Naive thymus-derived CD8-positive, alpha-beta T cell (primary cell): ENCODE measurements at regions of chr5 and their contacts with region 1.

Region 1: DNA sequence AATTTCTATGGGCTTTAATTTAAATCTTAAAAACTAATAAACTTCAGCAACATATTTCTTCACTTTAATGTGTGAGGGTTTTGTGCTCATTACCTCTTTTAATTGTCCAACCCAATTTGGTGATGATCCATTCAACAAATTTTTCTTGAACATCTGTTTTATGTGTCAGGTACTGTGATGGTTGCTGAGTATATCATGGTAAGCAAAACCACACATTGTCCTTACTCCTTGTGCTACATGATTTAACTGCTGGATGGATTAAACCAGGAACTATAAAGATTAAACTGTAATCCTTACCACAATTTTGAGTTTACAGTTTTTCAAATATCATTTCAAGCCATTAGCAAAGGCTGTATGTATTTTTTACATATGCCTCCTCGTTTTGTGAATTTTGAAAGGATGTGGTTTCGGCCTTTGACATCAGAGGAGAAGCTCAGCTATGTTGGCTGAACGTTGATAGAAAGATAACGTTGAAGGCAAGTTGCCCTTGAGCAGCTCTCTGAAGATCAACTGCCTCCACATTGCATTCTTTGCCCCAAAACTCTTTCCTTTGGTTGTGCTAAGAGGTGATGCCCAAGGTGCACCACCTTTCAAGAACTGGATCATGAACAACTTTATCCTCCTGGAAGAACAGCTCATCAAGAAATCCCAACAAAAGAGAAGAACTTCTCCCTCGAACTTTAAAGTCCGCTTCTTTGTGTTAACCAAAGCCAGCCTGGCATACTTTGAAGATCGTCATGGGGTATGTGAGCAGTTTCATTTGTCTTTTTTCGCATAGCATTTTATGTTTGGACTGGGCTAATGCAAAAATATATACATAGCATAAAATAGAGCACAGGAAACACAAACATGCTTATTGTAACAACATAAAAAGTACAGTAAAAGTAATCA is at the start of gene ITK:
- DNase-seq: peak in 8 of 10 donors; percentile 38 to 83 (median 70)
- ATAC-seq: peak; percentile 81 to 90
- H3K4me3 Mint-ChIP-seq: peak within 1 kb of the TSS; percentile 80 to 100 (median 98)
- H3K27ac Mint-ChIP-seq: peak within 1 kb of the TSS; percentile 92 to 100 (median 96)
- H3K4me1 Mint-ChIP-seq: peaks cover 28 to 56% (median 52%) of the 10 kb centered on the region in 4 donors
- H3K27me3 Mint-ChIP-seq: no peaks in the 10 kb centered on the region
- polyA plus RNA-seq, gene ITK: 109 to 231 (median 148) TPM

Region 2: DNA sequence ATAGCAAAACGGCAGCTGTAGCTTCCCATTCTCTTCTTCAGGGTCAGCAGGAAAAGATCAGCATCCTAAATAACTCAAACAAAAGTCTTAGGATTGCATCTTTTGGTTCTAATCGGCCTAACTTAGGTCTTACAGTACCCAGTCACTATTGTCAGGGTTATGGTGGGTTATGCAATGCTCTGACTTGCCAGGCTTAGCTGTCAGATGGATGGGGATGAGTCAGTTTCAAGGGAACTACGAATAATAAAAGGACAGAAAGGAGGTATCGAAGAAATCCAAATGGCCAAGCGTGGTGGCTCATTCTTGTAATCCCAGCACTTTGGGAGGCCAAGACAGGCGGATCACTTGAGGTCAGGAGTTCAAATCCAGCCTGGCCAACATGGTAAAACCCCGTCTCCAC is 284.1 kb before region 1 on chr5:
- POLR2A ChIA-PET with region 1: no interaction called
- DNase-seq: no peak
- ATAC-seq: no peak
- H3K4me3 Mint-ChIP-seq: no peak overlapping the region
- H3K27ac Mint-ChIP-seq: no peak overlapping the region
- H3K4me1 Mint-ChIP-seq: peaks cover 9 to 27% (median 22%) of the 10 kb centered on the region in 4 donors
- H3K27me3 Mint-ChIP-seq: peaks cover 0 to 3% (median 0%) of the 10 kb centered on the region in 5 donors

Region 3: GRCh38 chr5:157108976-157109375 is 71.6 kb before region 1 on chr5 and contains the start of gene HAVCR2:
- POLR2A ChIA-PET with region 1: no interaction called
- DNase-seq: peak in 9 of 10 donors; percentile 10 to 72 (median 45)
- ATAC-seq: peak; percentile 95 to 97
- H3K4me3 Mint-ChIP-seq: peak within 1 kb of the TSS; percentile 68 to 89 (median 84)
- H3K27ac Mint-ChIP-seq: peak within 1 kb of the TSS; percentile 78 to 96 (median 92)
- H3K4me1 Mint-ChIP-seq: peaks cover 18 to 59% (median 42%) of the 10 kb centered on the region in 4 donors
- H3K27me3 Mint-ChIP-seq: no peaks in the 10 kb centered on the region
- polyA plus RNA-seq, gene HAVCR2: 4.4 to 8.9 (median 5.4) TPM

Region 4: GRCh38 chr5:157148734-157149615 is 31.6 kb before region 1 on chr5:
- POLR2A ChIA-PET with region 1: interaction called, 16 read pairs
- DNase-seq: peak; percentile 55 to 87 (median 81)
- ATAC-seq: peak; percentile 72 to 78
- H3K4me3 Mint-ChIP-seq: peak overlapping the region in 6 of 10 donors; percentile 1 to 55 (median 19)
- H3K27ac Mint-ChIP-seq: peak overlapping the region; percentile 34 to 91 (median 74)
- H3K4me1 Mint-ChIP-seq: peaks cover 17 to 48% (median 43%) of the 10 kb centered on the region in 4 donors
- H3K27me3 Mint-ChIP-seq: no peaks in the 10 kb centered on the region

Region 5: GRCh38 chr5:157167214-157167621 is 13.4 kb before region 1 on chr5:
- POLR2A ChIA-PET with region 1: interaction called, 17 read pairs
- DNase-seq: no peak
- ATAC-seq: no peak
- H3K4me3 Mint-ChIP-seq: peak overlapping the region; percentile 1 to 82 (median 68)
- H3K27ac Mint-ChIP-seq: peak overlapping the region; percentile 6 to 94 (median 78)
- H3K4me1 Mint-ChIP-seq: peaks cover 34 to 63% (median 48%) of the 10 kb centered on the region in 4 donors
- H3K27me3 Mint-ChIP-seq: no peaks in the 10 kb centered on the region

Region 6: GRCh38 chr5:157225469-157226422 is 45.1 kb after region 1 on chr5:
- POLR2A ChIA-PET with region 1: interaction called, 990 read pairs
- DNase-seq: peak in 1 of 10 donors; percentile 32
- ATAC-seq: peak; percentile 23 to 24
- H3K4me3 Mint-ChIP-seq: peak overlapping the region in 9 of 10 donors; percentile 2 to 66 (median 33)
- H3K27ac Mint-ChIP-seq: peak overlapping the region; percentile 65 to 92 (median 82)
- H3K4me1 Mint-ChIP-seq: peaks cover 25 to 69% (median 46%) of the 10 kb centered on the region in 4 donors
- H3K27me3 Mint-ChIP-seq: no peaks in the 10 kb centered on the region

Region 7: DNA sequence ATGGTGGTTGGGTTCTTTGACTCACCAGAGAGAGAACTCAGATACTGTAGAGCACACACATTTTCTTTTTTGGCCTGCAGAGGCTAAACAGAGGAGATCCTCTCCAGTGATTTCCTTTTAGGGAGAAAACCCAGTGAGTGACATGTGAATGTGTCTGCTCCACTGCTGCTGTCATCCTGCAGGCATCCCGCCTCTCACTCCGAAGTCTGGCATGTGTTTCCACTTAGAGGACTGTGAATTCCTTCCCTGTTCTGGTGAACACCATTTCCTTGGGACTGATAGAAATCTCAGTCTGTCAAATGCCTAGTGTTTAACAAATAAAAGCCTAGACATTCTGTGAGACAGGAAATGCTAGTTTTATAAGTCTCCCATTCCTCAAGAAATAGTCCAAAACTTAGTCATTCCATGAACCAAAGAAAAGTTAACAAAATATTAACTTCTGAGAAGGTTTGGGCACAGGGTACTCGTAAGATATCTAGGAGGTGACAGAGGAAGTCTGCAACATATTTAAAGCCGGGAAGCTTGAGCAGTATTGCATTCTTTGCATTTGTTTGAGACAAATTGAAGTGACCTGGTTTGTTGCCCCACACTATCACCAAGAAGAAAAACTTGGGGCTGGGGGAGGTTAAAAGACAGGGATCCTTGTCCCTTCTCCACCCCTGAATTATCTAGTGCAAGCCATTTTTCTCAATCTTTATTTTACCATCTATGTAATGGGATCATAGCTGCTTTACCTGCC is 204.5 kb after region 1 on chr5:
- POLR2A ChIA-PET with region 1: no interaction called
- DNase-seq: no peak
- ATAC-seq: no peak
- H3K4me3 Mint-ChIP-seq: no peak overlapping the region
- H3K27ac Mint-ChIP-seq: peak overlapping the region in 5 of 10 donors; percentile 18 to 68 (median 42)
- H3K4me1 Mint-ChIP-seq: peaks cover under 1 to 8% (median 4%) of the 10 kb centered on the region in 4 donors
- H3K27me3 Mint-ChIP-seq: no peaks in the 10 kb centered on the region

Region 8: DNA sequence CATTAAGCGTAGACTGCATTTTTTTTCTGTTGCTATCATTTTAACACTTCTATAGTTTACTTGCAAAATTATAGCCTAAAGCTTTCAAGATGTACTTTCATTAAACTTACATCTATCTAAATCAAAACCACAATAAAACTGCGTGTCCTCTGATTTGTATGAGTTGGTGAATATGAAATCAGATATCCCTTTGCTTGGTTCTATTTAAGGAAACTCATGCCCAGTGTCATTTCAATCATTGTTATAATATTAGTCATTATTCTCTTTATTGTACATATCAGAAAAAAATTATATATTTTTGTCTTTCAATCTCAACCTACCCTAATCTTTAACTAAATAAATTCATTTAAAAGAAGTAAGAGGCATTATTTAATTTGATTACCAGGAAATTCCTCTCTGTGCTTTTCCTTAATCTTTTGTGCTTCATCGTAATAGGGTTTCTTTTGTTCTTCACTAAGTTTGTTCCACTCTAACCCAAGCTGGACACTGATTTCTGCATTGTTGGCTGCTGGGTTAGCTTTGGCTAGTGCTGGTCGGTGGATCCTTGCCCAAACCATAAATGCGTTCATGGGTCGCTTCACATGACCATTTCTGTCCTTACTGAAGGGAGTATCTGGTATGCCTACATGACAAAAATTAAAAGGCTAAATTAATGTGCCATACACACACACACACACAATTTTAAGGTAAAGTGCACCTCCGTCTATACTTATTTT is 467.8 kb after region 1 on chr5:
- POLR2A ChIA-PET with region 1: no interaction called
- DNase-seq: no peak
- ATAC-seq: no peak
- H3K4me3 Mint-ChIP-seq: no peak overlapping the region
- H3K27ac Mint-ChIP-seq: no peak overlapping the region
- H3K4me1 Mint-ChIP-seq: peaks cover 4 to 14% (median 13%) of the 10 kb centered on the region in 4 donors
- H3K27me3 Mint-ChIP-seq: peaks cover 0 to 2% (median under 1%) of the 10 kb centered on the region in 5 donors